ENCODE measurements at regions of chr1 and their contacts with region 1.

Region 1: DNA sequence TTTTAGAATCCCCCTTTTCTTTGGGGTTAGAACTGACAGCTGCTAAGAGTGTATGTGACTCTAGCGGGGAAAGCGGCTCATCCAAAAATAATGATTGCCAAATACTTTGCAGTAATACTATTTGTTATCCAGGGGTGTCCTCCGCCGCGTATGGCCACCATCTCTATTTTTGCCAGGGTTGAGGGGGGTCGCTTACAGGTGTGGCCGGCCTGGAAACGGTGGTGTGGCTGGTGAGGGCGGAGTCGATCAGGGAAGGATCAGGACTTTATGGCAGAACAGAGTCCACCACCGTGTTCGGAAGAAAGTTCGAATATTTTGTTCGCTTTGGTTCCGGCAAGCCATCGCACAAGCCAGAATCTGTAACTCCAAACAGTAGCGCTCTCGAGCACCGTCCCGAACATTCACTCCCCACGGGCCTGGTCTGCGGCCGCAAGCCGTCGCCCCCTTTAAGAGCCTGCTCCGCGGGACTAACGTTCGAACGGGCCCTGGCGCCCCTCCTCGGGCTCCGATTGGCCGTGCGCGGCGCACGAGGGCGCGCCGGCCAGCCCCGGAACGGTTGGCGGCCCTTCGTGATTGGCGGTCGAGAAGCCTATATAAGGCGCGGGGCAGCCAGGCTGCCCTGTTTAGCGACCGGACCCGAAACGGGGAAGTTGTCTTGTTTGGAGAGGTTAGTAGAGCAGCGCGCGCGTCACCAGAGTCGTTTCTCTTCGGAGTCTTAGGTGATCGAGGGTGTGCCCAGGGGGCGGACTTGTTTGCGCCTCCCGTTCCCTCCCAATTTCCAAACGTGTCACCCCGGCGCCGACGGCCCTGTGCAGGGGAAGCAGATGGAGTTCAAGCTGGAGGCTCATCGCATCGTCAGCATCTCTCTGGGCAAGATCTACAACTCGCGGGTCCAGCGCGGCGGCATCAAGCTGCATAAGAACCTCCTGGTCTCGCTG is at the start of gene IER5:
- DNase-seq: peak; percentile 97
- H3K4me3 ChIP-seq: peak within 1 kb of the TSS; percentile 47 to 97 (median 54)
- H3K27ac ChIP-seq: peak within 1 kb of the TSS; percentile 47
- H3K4me1 ChIP-seq: peaks cover 17% of the 10 kb centered on the region
- H3K27me3 ChIP-seq: no peaks in the 10 kb centered on the region
- CTCF ChIP-seq: no peak
- POLR2A ChIP-seq: peak; percentile 100
- total RNA-seq, gene IER5: 14.4 and 14.9 TPM in 2 replicates

Region 2: DNA sequence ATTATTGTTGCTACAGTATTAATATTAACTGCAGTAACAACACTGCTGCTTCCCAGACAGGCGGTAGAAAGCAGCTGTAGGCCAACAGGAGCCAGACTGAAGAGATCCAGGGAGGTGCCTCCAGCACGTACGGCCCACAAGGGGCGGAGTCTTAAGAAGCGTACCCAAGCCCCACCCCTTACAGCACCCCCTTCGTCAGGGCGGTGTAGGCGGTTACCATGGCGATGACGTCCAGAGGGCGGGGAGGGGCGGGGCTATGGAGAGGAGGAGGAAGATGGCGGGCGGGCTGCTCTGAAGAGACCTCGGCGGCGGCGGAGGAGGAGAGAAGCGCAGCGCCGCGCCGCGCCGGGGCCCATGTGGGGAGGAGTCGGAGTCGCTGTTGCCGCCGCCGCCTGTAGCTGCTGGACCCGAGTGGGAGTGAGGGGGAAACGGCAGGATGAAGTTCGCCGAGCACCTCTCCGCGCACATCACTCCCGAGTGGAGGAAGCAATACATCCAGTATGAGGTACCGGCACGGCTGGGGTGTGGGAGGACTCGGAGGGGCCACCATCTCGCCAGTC is 456.5 kb before region 1 on chr1 and contains the start of gene XPR1:
- CTCF ChIA-PET with region 1: no interaction called
- POLR2A ChIA-PET with region 1: no interaction called
- dilution Hi-C with region 1: no loop called
- intact Hi-C with region 1: loop called (anchors 10 kb)
- DNase-seq: peak; percentile 99
- H3K4me3 ChIP-seq: peak within 1 kb of the TSS; percentile 71 to 90 (median 87)
- H3K27ac ChIP-seq: peak within 1 kb of the TSS; percentile 34
- H3K4me1 ChIP-seq: peaks cover 13% of the 10 kb centered on the region
- H3K27me3 ChIP-seq: peaks cover 3 to 5% of the 10 kb centered on the region in 2 experiments
- CTCF ChIP-seq: peak in 1 of 2 donors; percentile 26
- POLR2A ChIP-seq: peak; percentile 52
- total RNA-seq, gene XPR1: 26.7 and 29.3 TPM in 2 replicates

Region 3: DNA sequence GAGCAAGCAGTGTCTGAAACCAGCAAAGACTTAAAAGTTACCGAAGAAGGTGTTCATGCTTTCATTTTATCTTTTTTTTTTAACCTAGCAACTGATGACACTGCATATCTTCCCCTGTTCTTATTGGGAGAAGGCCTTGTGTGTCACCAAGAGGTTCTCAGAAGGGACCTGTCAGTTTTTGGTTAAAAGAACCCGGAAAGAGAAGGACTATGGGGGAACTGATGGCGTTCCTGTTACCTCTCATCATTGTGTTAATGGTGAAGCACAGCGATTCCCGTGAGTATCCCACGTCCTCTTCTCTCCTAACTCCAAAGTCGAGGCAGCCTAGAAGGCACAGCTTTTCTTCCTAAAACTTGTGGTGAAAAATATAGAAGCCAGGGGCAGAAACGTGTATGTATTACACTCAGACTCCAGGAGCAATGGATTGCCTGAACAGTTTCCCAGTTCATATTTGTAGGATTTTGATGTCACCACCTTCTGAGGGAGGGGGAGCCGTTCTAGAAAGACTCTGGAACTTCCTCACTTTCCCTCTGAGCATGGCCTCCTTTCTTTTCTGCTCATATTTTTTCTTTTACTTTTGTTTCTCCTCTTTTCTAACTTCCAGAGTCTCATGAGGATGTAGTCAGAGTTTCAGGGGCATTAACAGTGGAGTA is 54.4 kb before region 1 on chr1 and contains the start of gene MR1:
- CTCF ChIA-PET with region 1: interaction called, 18 read pairs
- POLR2A ChIA-PET with region 1: no interaction called
- dilution Hi-C with region 1: no loop called
- intact Hi-C with region 1: loop called (anchors 1 kb)
- DNase-seq: peak; percentile 91
- H3K4me3 ChIP-seq: peak within 1 kb of the TSS in 2 of 3 experiments; percentile 1 to 43
- H3K27ac ChIP-seq: peak within 1 kb of the TSS; percentile 18
- H3K4me1 ChIP-seq: peaks cover 10% of the 10 kb centered on the region
- H3K27me3 ChIP-seq: no peaks in the 10 kb centered on the region
- CTCF ChIP-seq: no peak
- POLR2A ChIP-seq: no peak
- total RNA-seq, gene MR1: 1.1 and 1.3 TPM in 2 replicates

Region 4: DNA sequence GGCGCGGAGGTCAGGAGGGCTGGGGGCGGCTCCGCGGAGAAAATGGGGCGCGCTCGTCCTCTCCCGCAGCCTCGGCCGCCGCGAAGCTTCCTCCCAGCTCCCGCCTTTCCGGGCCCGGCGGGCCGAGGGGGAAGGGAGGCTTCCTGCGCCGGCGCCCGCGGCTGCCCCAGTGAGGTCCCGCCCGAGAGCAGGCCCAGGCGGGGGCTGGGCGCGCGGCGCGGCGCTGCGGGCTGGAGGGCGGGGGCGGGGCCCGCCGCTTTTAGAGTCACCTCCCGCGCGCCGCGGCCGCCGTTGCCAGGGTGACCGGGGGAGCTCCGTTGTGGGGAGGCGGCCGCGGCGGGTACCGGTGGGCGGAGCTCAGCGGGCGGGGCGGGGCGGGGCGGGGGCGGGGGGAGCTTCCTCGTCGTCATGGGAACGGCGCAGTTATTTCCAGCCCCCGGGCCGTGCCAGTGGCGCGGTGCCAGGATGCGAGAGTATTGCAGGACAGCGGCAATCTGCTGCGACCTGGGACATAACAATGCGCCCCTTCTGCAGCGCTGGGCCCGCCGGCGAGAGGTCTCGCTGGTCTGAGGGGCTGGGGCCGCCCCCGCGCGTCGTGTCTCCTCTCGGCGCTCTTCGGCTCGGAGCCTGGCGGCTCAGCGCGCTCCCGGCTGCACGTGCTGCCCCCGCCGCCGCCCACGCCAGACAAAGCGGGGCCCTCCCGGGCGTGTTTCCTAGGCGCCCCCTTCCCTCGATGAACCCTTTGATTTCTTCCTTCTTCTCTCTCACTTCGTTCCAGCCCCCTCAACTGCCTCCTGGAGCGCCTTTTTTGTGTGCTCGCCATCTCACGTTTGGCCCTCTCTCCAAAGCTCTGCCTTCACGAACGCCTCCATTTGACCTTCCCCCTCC is 17.0 kb after region 1 on chr1:
- CTCF ChIA-PET with region 1: interaction called, 43 read pairs
- POLR2A ChIA-PET with region 1: interaction called, 114 read pairs
- dilution Hi-C with region 1: no loop called
- intact Hi-C with region 1: loop called (anchors 1 kb)
- DNase-seq: peak; percentile 86
- H3K4me3 ChIP-seq: peak overlapping the region; percentile 44 to 63 (median 46)
- H3K27ac ChIP-seq: peak overlapping the region; percentile 90
- H3K4me1 ChIP-seq: peaks cover 58% of the 10 kb centered on the region
- H3K27me3 ChIP-seq: no peaks in the 10 kb centered on the region
- CTCF ChIP-seq: no peak
- POLR2A ChIP-seq: peak; percentile 43

Region 5: DNA sequence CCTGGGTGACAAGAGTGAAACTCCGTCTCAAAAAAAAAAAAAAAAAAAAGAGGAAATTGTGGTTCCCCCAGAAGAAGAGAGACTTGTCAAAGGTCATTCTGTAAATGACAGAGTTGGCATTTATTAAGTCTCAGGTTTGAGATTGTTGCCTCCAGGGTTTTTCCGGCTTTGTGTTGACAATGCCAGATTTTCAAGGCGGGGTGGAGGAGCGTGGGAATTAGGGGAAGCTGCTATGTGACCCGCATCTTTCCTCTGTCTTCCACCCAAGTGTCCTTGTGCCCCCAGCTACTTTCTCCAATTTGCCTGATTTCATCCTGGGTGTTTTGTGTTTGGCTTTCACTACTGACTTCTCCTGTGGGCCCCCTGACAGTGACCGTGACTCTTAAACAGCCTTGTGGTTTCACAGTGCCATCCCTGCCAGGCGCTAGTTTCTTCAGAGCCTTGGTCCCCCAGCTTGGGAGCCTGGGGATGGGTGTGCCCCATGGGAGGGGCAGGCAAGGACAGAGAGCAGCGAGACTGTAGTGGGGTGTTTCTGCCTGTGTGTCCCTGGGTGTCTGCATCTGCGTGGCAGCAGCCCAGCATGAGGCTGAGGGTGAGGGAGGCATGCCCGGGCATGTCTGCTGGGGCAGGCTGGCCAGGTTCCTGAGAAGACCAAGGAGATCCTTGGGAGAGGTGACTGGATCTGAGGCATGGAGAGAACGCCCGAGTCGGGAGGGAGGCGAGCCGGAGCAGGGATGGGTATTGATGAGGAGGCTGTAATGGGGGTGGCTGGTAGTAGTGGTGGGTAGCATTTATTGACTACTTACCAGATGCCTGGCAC is 46.4 kb after region 1 on chr1:
- CTCF ChIA-PET with region 1: interaction called, 319 read pairs
- POLR2A ChIA-PET with region 1: interaction called, 53 read pairs
- dilution Hi-C with region 1: no loop called
- intact Hi-C with region 1: loop called (anchors 1 kb)
- DNase-seq: peak; percentile 75
- H3K4me3 ChIP-seq: no peak overlapping the region
- H3K27ac ChIP-seq: peak overlapping the region; percentile 74
- H3K4me1 ChIP-seq: peaks cover 26% of the 10 kb centered on the region
- H3K27me3 ChIP-seq: no peaks in the 10 kb centered on the region
- CTCF ChIP-seq: no peak
- POLR2A ChIP-seq: no peak

Region 6: DNA sequence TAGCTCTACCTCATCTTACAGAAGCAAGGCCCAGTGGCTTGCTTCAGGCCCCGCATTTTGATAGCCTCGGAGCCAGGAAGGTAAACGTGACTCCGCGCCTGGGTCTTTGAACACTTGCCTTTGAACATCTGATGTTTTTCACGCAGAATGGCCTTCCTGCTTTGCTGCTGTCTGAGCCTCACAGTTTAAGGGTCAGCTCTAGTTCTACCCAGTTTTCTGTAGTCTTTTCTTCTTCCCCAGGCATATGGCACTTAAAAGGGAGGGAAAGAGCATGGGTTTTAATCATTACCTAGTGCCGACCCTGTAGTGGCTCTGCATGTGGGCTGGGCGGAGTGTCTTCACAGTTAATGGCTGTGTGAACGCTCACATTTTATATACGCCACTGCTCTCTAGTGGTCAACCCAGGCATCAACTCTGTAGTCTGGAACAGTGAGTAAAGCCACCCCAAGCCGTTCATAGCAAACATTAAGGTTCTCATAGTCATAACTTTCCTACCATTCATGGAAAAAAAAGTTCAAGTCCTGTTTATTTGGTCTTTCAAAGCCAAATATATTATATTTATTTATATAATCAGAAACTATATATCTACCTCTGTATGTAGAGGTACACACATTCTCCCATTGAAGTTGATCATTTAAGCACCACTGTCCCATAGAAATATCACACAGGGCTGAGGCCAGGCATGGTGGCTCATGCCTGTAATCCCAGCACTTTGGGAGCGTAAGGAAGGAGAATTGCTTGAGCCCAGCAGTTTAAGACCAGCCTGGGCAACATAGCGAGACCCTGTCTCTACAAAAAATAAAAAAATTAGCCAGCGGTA is 78.2 kb after region 1 on chr1:
- CTCF ChIA-PET with region 1: interaction called, 16 read pairs
- POLR2A ChIA-PET with region 1: no interaction called
- dilution Hi-C with region 1: no loop called
- intact Hi-C with region 1: loop called (anchors 1 kb)
- DNase-seq: peak; percentile 74
- H3K4me3 ChIP-seq: no peak overlapping the region
- H3K27ac ChIP-seq: no peak overlapping the region
- H3K4me1 ChIP-seq: no peaks in the 10 kb centered on the region
- H3K27me3 ChIP-seq: peaks cover 2 to 10% of the 10 kb centered on the region in 2 experiments
- CTCF ChIP-seq: peak; percentile 71 to 82
- POLR2A ChIP-seq: no peak

Region 7: GRCh38 chr1:181317261-181317930 is 229.0 kb after region 1 on chr1:
- CTCF ChIA-PET with region 1: no interaction called
- POLR2A ChIA-PET with region 1: no interaction called
- dilution Hi-C with region 1: no loop called
- intact Hi-C with region 1: no loop called
- DNase-seq: no peak
- H3K4me3 ChIP-seq: no peak overlapping the region
- H3K27ac ChIP-seq: no peak overlapping the region
- H3K4me1 ChIP-seq: no peaks in the 10 kb centered on the region
- H3K27me3 ChIP-seq: peaks cover 31 to 38% of the 10 kb centered on the region in 2 experiments
- CTCF ChIP-seq: no peak
- POLR2A ChIP-seq: no peak